AG04450 (cell line): ENCODE measurements at regions of chr12 and their contacts with region 1.

Region 1: GRCh38 chr12:71415336-71416231 is 24.0 kb upstream of the LGR5 start:
- DNase-seq: peak; percentile 20
- H3K4me3 ChIP-seq: no peak overlapping the region
- H3K27ac ChIP-seq: no peak overlapping the region
- H3K27me3 ChIP-seq: no peaks in the 10 kb centered on the region
- CTCF ChIP-seq: peak; percentile 86

Region 2: DNA sequence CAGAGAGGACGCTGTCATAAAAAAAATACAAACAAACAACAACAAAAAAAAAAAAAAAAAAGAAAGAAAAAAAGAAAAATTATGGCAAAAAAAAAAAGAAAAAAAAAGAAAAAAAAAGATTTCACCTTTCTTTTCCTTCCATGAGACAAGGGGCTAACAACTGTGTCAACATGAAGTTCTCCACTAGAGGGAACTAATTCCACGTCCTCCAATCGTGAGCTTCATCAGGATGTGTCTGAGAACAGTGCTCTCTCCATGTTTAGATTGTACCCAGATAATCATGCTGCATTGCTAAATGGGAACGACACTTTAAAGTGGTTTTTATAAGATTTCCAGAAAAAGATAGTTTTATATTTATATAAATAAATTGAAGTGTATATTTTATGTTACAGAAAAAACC is 682.2 kb before region 1 on chr12:
- CTCF ChIA-PET with region 1: no interaction called
- POLR2A ChIA-PET with region 1: no interaction called
- DNase-seq: no peak
- H3K4me3 ChIP-seq: no peak overlapping the region
- H3K27ac ChIP-seq: no peak overlapping the region
- H3K27me3 ChIP-seq: no peaks in the 10 kb centered on the region
- CTCF ChIP-seq: peak; percentile 79

Region 3: DNA sequence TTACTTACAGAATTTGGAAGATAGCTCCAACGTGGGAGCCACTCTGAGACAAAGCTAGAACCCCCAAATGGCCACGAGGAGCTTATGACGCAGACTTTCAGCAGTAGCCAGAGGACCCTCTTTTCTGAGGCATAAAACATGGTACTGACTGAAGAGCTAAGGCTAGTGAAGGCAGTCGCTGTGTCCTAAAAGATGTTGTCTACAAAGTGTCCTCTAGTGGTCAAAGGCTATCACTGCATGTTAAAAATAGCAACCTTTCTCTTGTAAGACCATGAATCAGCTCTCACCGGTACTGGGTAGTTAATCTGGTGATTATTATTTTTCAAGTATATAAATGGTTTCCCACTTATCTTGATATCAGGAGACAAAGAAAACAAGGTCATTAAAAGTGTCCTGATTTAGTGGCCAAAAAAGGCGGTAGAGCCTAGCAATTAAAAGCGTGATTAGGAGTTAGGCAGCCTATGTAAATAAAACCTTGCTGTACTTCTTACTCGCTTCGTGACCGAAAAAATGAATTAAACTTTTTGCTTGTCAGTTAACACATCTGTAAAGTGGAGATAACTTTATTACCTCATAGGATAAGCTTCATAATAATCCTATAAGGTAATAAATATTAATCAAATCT is 23.0 kb before region 1 on chr12:
- CTCF ChIA-PET with region 1: interaction called, 18 read pairs
- POLR2A ChIA-PET with region 1: no interaction called
- DNase-seq: peak; percentile 37
- H3K4me3 ChIP-seq: no peak overlapping the region
- H3K27ac ChIP-seq: no peak overlapping the region
- H3K27me3 ChIP-seq: no peaks in the 10 kb centered on the region
- CTCF ChIP-seq: peak; percentile 88

Region 4: DNA sequence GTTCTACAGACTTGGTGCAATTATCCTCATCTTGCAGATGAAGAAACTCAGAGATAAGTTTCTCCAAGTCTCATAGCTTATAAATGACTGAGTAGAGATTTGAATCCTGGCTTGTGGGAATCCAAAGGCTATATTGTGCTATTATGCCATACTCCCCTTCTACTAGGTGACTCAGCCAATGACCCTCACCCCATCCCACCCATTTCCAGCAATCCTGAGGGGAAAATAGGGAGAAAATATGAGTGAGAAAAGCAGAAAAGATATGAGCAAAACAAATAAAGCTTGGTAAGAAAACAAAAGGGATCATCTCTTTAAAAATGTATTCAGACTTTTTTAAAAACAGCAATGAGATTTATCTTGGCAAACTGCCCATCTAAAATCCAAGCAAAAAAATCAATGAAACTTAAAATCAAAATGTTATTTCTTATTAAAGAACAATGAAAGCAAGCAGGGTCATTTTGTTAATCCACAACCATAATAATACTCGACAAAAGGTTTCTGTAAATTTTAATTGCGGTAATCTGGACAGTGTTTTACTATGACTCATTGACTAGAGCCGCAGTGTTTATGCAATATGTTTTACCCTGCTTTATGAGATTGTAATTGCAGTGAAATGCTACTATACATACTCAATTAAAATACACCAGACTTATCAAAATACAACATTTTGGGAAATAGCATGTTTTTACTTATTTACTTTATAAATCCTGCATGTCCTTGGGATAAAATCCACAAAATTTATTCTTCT is 10.9 kb after region 1 on chr12:
- CTCF ChIA-PET with region 1: interaction called, 22 read pairs
- POLR2A ChIA-PET with region 1: no interaction called
- DNase-seq: no peak
- H3K4me3 ChIP-seq: no peak overlapping the region
- H3K27ac ChIP-seq: no peak overlapping the region
- H3K27me3 ChIP-seq: peaks cover 2% of the 10 kb centered on the region
- CTCF ChIP-seq: no peak

Region 5: DNA sequence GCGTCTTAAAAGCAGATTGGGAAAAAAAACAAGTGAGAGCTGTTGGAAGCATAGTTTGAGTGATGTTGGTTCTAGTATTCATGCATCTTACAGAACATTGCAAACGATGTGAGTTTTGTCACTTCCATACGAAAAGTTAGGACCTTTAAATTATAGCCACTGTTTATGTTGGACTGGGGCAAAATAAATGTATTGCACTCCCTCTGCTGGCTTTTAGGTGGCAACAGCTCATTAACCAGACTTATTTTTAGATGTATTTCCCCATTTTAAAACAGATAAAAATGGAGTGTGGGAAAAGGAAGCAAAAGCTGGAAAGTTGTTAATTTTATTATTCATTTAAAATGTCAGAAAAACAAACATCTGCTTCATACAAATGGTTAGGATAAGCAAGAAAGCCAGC is 135.9 kb after region 1 on chr12:
- CTCF ChIA-PET with region 1: interaction called, 82 read pairs
- POLR2A ChIA-PET with region 1: no interaction called
- DNase-seq: no peak
- H3K4me3 ChIP-seq: no peak overlapping the region
- H3K27ac ChIP-seq: no peak overlapping the region
- H3K27me3 ChIP-seq: no peaks in the 10 kb centered on the region
- CTCF ChIP-seq: peak; percentile 56

Region 6: DNA sequence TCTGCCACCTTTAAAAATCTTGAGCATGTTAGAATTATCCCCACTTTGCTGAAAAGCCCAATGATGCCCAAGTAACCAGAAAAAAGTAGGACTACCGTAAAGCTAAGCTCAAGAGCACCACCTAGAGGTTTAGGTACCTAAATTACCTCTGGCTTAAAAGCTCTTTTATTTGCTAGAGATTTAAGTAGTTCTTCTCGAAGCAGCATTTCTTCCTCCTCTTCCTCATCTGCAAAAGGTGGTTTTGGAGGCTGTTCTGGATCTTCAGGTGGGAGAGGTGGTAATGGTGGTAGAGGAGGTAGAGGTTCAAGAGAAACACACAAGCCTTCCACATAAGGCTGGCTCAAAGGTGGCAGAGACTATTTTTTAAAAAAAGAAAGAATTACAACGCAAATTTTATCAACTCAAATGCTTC is 221.1 kb after region 1 on chr12:
- CTCF ChIA-PET with region 1: interaction called, 12 read pairs
- POLR2A ChIA-PET with region 1: no interaction called
- DNase-seq: peak; percentile 27
- H3K4me3 ChIP-seq: no peak overlapping the region
- H3K27ac ChIP-seq: no peak overlapping the region
- H3K27me3 ChIP-seq: no peaks in the 10 kb centered on the region
- CTCF ChIP-seq: peak; percentile 74